Mammary epithelial cell (primary cell): ENCODE measurements at regions of chr3 and their contacts with region 1.

Region 1: DNA sequence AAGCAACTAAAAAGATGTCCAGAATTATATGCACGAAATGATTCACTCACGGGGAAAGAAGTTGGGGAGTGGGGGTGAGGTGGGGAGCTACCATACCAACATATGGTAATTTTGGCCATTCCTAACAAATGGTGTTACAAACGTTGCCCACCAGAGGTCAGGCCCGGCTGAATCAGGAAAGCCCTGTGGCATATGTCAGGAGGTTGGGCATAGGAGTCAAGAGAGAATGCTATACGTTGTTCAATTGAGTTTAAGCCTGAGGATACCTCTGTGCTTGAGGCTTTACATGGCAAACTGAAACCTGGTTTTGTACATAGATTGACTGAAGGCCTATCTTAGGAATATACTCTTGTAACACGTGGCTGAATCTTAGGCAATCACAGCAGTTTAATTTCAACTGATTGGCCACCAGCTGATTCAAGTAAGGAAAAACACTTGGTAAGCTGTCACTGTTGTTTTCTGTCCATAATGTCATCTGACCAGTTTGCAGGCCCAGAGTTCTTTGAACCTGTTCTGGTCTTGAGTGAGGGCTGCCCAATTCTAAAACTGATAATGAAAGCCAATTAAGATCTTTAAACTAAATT is 23.4 kb upstream of the SLC2A2 start:
- DNase-seq: peak; percentile 49
- H3K4me3 ChIP-seq: no peak overlapping the region
- H3K27ac ChIP-seq: no peak overlapping the region
- H3K4me1 ChIP-seq: no peaks in the 10 kb centered on the region
- H3K27me3 ChIP-seq: no peaks in the 10 kb centered on the region
- CTCF ChIP-seq: peak; percentile 58 to 81

Region 2: DNA sequence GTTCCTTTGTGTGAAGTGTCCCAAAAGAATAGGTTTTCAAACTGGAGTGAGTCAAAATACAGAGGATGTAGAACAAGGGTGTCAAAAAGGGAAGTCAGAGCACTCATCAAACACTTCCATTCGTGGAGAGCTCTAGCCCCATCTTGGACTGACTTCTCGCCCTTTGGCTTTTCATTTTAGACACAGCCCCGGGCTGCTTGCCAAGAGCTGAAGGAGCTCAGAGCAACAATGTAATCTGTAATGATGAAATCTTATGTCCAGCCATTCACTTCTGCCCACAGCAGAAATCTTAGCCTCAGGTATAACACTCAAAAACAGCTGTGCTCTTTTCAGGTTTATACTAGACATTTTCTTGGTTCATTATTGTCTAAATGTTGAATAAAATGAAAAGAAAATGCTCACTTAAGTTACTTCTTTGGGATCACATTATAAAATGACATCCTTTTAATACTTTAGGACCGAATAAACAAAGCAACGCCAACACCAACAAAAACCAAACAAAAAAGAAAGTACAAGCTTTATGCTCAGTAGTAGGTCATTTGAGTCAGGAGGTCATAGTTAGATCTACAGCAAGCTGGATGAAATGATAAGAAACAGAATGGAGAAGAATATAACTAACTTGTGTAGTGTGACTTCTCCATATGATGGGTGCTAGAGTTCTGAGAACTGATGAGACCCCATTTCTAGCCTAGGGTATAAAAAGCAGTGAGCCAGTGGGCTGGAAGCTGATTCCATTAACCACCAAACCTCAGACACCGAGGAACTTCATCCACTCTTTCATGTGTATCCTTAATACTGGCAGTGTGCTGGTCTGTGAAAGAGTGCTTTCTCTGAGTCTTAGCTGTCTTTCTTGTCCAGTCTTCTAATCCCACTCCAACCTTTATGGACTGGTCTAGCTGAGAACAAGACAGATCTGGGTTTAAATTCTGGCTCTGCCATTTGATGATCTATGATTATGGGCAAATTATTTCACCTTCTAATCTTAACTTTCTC is 332.2 kb before region 1 on chr3:
- CTCF ChIA-PET with region 1: no interaction called
- dilution Hi-C with region 1: no loop called
- in situ Hi-C with region 1: no loop called
- intact Hi-C with region 1: no loop called
- DNase-seq: peak; percentile 45
- H3K4me3 ChIP-seq: no peak overlapping the region
- H3K27ac ChIP-seq: no peak overlapping the region
- H3K4me1 ChIP-seq: peaks cover 47% of the 10 kb centered on the region
- H3K27me3 ChIP-seq: no peaks in the 10 kb centered on the region
- CTCF ChIP-seq: no peak

Region 3: DNA sequence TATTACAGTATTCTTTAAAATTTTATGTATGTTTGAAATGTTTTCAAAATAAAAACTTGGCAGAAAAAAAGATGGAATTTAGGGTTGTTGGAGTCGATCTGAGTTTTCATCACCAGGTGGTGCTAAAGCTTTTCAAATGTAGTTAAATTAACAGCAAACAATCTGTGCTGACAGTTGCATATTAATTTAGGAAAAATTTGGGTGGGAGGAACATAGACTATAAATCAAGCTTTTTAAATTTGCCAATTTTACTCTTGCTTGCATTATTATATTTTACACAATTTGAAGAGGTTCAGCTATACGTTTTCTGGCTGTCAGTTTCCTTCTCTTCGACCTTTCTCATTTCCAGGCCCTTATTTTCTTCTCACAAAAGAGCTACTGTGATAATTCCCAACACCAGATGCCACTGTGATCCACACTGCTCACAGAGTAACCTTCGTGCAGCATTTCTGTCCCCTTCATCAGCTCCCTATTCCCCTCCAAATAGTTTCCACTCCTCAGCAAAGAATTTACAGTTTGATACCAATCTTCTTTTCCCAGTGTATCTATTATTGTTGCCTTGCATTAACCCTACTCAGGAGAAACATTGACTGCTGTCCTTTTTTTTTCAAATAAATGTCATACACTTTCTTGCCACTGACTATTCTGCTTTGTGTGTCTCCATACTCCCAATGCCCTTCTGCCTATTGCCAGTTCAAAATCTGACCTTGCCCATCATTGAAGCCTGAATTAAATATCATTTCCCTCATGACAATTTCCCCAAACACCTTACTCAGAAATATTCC is 88.1 kb before region 1 on chr3:
- CTCF ChIA-PET with region 1: interaction called, 6 read pairs
- dilution Hi-C with region 1: no loop called
- in situ Hi-C with region 1: loop called in 1 of 2 experiments (anchors 10 kb)
- intact Hi-C with region 1: loop called (anchors 1 kb)
- DNase-seq: peak; percentile 12
- H3K4me3 ChIP-seq: no peak overlapping the region
- H3K27ac ChIP-seq: no peak overlapping the region
- H3K4me1 ChIP-seq: no peaks in the 10 kb centered on the region
- H3K27me3 ChIP-seq: no peaks in the 10 kb centered on the region
- CTCF ChIP-seq: peak; percentile 49 to 58

Region 4: DNA sequence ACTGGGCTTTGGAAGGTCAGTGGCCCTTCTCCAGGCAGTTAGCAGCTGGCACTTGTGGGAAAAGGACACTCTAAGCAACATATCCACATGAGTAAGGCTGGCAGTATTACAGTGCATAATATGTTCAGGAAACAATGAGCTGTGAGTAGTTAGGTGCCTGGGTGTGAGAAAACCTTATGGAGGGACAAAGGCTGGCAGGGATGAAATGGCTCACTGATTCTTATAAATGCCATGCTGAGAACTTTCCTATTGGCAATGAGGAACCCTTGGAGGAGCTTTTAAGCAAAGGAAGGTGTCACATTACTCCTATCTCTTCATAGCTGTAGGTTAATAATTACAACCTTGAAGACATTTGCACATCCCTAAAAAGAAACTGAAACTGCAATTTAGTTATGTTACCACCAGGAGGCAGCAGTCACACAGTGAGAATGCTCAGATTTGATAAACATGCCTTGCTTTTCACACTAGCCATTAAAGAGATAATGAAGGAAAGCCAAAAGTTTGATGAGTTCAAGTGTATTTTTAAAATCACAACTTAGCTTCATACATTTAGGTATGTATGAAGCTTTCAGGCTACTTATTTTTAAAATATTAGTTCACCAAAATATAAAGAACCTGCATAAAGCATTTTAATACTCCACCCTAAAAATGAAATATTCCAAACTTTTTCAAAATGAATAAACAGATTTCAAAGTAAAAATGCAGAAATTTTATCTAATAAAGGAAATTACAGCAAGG is 113.2 kb after region 1 on chr3:
- CTCF ChIA-PET with region 1: no interaction called
- dilution Hi-C with region 1: no loop called
- in situ Hi-C with region 1: no loop called
- intact Hi-C with region 1: loop called (anchors 1 kb)
- DNase-seq: no peak
- H3K4me3 ChIP-seq: no peak overlapping the region
- H3K27ac ChIP-seq: no peak overlapping the region
- H3K4me1 ChIP-seq: peaks cover 16% of the 10 kb centered on the region
- H3K27me3 ChIP-seq: no peaks in the 10 kb centered on the region
- CTCF ChIP-seq: peak; percentile 55 to 60

Region 5: GRCh38 chr3:171187706-171188290 is 137.8 kb after region 1 on chr3:
- CTCF ChIA-PET with region 1: interaction called, 3 read pairs
- dilution Hi-C with region 1: no loop called
- in situ Hi-C with region 1: no loop called
- intact Hi-C with region 1: loop called (anchors 1 kb)
- DNase-seq: no peak
- H3K4me3 ChIP-seq: no peak overlapping the region
- H3K27ac ChIP-seq: no peak overlapping the region
- H3K4me1 ChIP-seq: no peaks in the 10 kb centered on the region
- H3K27me3 ChIP-seq: no peaks in the 10 kb centered on the region
- CTCF ChIP-seq: peak; percentile 53 to 78

Region 6: GRCh38 chr3:171328419-171329082 is 278.6 kb after region 1 on chr3:
- CTCF ChIA-PET with region 1: no interaction called
- dilution Hi-C with region 1: no loop called
- in situ Hi-C with region 1: no loop called
- intact Hi-C with region 1: loop called (anchors 10 kb)
- DNase-seq: no peak
- H3K4me3 ChIP-seq: no peak overlapping the region
- H3K27ac ChIP-seq: no peak overlapping the region
- H3K4me1 ChIP-seq: no peaks in the 10 kb centered on the region
- H3K27me3 ChIP-seq: no peaks in the 10 kb centered on the region
- CTCF ChIP-seq: peak in 1 of 2 donors; percentile 22

Region 7: GRCh38 chr3:171566803-171567422 is 517.0 kb after region 1 on chr3:
- CTCF ChIA-PET with region 1: interaction called, 7 read pairs
- dilution Hi-C with region 1: no loop called
- in situ Hi-C with region 1: loop called in 1 of 2 experiments (anchors 25 kb)
- intact Hi-C with region 1: loop called (anchors 1 kb)
- DNase-seq: peak; percentile 25
- H3K4me3 ChIP-seq: no peak overlapping the region
- H3K27ac ChIP-seq: no peak overlapping the region
- H3K4me1 ChIP-seq: no peaks in the 10 kb centered on the region
- H3K27me3 ChIP-seq: no peaks in the 10 kb centered on the region
- CTCF ChIP-seq: peak; percentile 65 to 74